ENCODE measurements at regions of chr9 and their contacts with region 1.

Region 1: GRCh38 chr9:35603987-35604577 is 980 bp upstream of the TESK1 start:
- DNase-seq: peak; percentile 98 to 100 (median 99)
- ATAC-seq: peak; percentile 88
- H3K4me3 ChIP-seq: peak overlapping the region; percentile 94
- H3K4me3 Mint-ChIP-seq: peak overlapping the region; percentile 99
- H3K27ac ChIP-seq: peak overlapping the region; percentile 73 to 89
- H3K27ac Mint-ChIP-seq: peak overlapping the region; percentile 96
- H3K4me1 ChIP-seq: peaks cover 43% of the 10 kb centered on the region
- H3K4me1 Mint-ChIP-seq: peaks cover 33% of the 10 kb centered on the region
- H3K27me3 ChIP-seq: no peaks in the 10 kb centered on the region
- H3K27me3 Mint-ChIP-seq: no peaks in the 10 kb centered on the region
- CTCF ChIP-seq: peak; percentile 98

Region 2: GRCh38 chr9:35616681-35617459 is 12.8 kb after region 1 on chr9:
- CTCF ChIA-PET with region 1: interaction called, 12 read pairs
- POLR2A ChIA-PET with region 1: interaction called, 14 read pairs
- intact Hi-C with region 1: no loop called
- DNase-seq: peak; percentile 42 to 89 (median 62)
- ATAC-seq: peak; percentile 86
- H3K4me3 ChIP-seq: peak overlapping the region; percentile 77
- H3K4me3 Mint-ChIP-seq: peak overlapping the region; percentile 86
- H3K27ac ChIP-seq: peak overlapping the region; percentile 27 to 70
- H3K27ac Mint-ChIP-seq: peak overlapping the region; percentile 72
- H3K4me1 ChIP-seq: peaks cover 40% of the 10 kb centered on the region
- H3K4me1 Mint-ChIP-seq: peaks cover 50% of the 10 kb centered on the region
- H3K27me3 ChIP-seq: no peaks in the 10 kb centered on the region
- H3K27me3 Mint-ChIP-seq: no peaks in the 10 kb centered on the region
- CTCF ChIP-seq: peak; percentile 47

Region 3: GRCh38 chr9:35664531-35665470 is 60.7 kb after region 1 on chr9 and contains the start of gene ARHGEF39:
- CTCF ChIA-PET with region 1: interaction called, 10 read pairs
- POLR2A ChIA-PET with region 1: interaction called, 3 read pairs
- intact Hi-C with region 1: no loop called
- DNase-seq: peak in 12 of 14 experiments; percentile 35 to 84 (median 55)
- ATAC-seq: peak; percentile 74
- H3K4me3 ChIP-seq: peak within 1 kb of the TSS; percentile 61
- H3K4me3 Mint-ChIP-seq: peak within 1 kb of the TSS; percentile 85
- H3K27ac ChIP-seq: peak within 1 kb of the TSS; percentile 31 to 50
- H3K27ac Mint-ChIP-seq: peak within 1 kb of the TSS; percentile 85
- H3K4me1 ChIP-seq: peaks cover 61% of the 10 kb centered on the region
- H3K4me1 Mint-ChIP-seq: peaks cover 71% of the 10 kb centered on the region
- H3K27me3 ChIP-seq: no peaks in the 10 kb centered on the region
- H3K27me3 Mint-ChIP-seq: no peaks in the 10 kb centered on the region
- CTCF ChIP-seq: no peak
- total RNA-seq, gene ARHGEF39: 0.08 to 0.17 TPM

Region 4: GRCh38 chr9:35814841-35815543 is 210.9 kb after region 1 on chr9 and contains the start of gene HINT2:
- CTCF ChIA-PET with region 1: interaction called, 4 read pairs
- POLR2A ChIA-PET with region 1: interaction called, 4 read pairs
- intact Hi-C with region 1: loop called in 1 of 2 experiments (anchors 2 kb)
- DNase-seq: peak; percentile 93 to 99 (median 96)
- ATAC-seq: peak; percentile 79
- H3K4me3 ChIP-seq: peak within 1 kb of the TSS; percentile 80
- H3K4me3 Mint-ChIP-seq: peak within 1 kb of the TSS; percentile 91
- H3K27ac ChIP-seq: peak within 1 kb of the TSS; percentile 68 to 87
- H3K27ac Mint-ChIP-seq: peak within 1 kb of the TSS; percentile 91
- H3K4me1 ChIP-seq: peaks cover 42% of the 10 kb centered on the region
- H3K4me1 Mint-ChIP-seq: peaks cover 43% of the 10 kb centered on the region
- H3K27me3 ChIP-seq: no peaks in the 10 kb centered on the region
- H3K27me3 Mint-ChIP-seq: no peaks in the 10 kb centered on the region
- CTCF ChIP-seq: no peak
- total RNA-seq, gene HINT2: 10.9 to 12.6 TPM

Region 5: GRCh38 chr9:35882263-35882848 is 278.3 kb after region 1 on chr9:
- CTCF ChIA-PET with region 1: interaction called, 3 read pairs
- POLR2A ChIA-PET with region 1: no interaction called
- intact Hi-C with region 1: loop called (anchors 1 to 5 kb)
- DNase-seq: peak; percentile 68 to 90 (median 78)
- ATAC-seq: peak; percentile 64
- H3K4me3 ChIP-seq: no peak overlapping the region
- H3K4me3 Mint-ChIP-seq: no peak overlapping the region
- H3K27ac ChIP-seq: no peak overlapping the region
- H3K27ac Mint-ChIP-seq: no peak overlapping the region
- H3K4me1 ChIP-seq: no peaks in the 10 kb centered on the region
- H3K4me1 Mint-ChIP-seq: no peaks in the 10 kb centered on the region
- H3K27me3 ChIP-seq: no peaks in the 10 kb centered on the region
- H3K27me3 Mint-ChIP-seq: peaks cover 13% of the 10 kb centered on the region
- CTCF ChIP-seq: peak; percentile 98